CD4-positive, alpha-beta T cell (primary cell): ENCODE measurements at regions of chr15 and their contacts with region 1.

Region 1: DNA sequence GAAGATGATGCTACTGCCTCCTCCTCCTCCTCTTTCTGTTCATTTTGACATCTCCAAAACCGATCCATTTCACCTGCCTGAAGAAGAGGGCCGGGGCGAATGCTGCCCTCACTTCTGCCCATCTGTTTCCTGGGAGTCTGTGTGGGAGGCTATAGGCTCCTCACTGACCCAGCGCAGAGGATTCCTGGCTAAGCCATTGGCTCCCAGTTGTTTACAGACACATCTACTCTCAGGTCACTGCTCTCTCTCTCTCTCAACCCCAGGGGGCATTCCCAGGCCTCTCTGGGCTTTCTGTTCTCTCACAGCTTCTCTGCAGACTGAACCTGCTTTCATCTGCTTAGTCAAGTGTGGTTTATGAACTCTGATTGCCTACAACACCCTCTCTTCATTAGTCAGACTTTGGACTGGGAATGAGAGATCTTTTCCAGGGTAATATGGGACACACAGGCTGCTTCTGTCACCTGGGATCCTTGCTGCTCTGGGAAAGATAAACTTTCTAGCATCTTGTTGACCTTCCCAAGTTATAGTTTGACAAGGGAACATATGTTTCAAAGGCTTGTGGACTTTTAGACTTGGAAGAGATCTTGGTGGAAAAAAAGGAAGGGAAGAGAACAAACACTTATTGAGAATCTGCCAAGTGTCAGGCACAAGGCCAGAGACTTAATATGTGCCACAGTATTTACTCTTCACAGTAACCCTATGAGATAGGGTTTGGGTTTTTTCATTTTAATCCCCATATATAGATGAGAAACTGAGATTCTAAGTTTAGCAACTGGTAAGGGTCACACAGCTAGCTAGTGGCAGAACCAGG is 30.2 kb upstream of the USP3 start:
- DNase-seq: peak in 11 of 14 experiments; percentile 26 to 87 (median 53)
- ATAC-seq: peak; percentile 57
- H3K4me3 ChIP-seq: no peak overlapping the region
- H3K4me3 Mint-ChIP-seq: peak overlapping the region; percentile 3
- H3K27ac ChIP-seq: peak overlapping the region in 1 of 2 donors; percentile 35
- H3K27ac Mint-ChIP-seq: peak overlapping the region; percentile 82
- H3K4me1 ChIP-seq: peaks cover 61% of the 10 kb centered on the region
- H3K4me1 Mint-ChIP-seq: peaks cover 68% of the 10 kb centered on the region
- H3K27me3 ChIP-seq: no peaks in the 10 kb centered on the region
- H3K27me3 Mint-ChIP-seq: no peaks in the 10 kb centered on the region
- CTCF ChIP-seq: no peak

Region 2: GRCh38 chr15:63487076-63487757 is 13.0 kb after region 1 on chr15:
- CTCF ChIA-PET with region 1: interaction called, 4 read pairs
- POLR2A ChIA-PET with region 1: interaction called, 5 read pairs
- intact Hi-C with region 1: loop called in 1 of 2 experiments (anchors 1 kb)
- DNase-seq: peak; percentile 79 to 93 (median 88)
- ATAC-seq: peak; percentile 90
- H3K4me3 ChIP-seq: no peak overlapping the region
- H3K4me3 Mint-ChIP-seq: peak overlapping the region; percentile 2
- H3K27ac ChIP-seq: peak overlapping the region in 1 of 2 donors; percentile 33
- H3K27ac Mint-ChIP-seq: peak overlapping the region; percentile 29
- H3K4me1 ChIP-seq: peaks cover 67% of the 10 kb centered on the region
- H3K4me1 Mint-ChIP-seq: peaks cover 67% of the 10 kb centered on the region
- H3K27me3 ChIP-seq: no peaks in the 10 kb centered on the region
- H3K27me3 Mint-ChIP-seq: no peaks in the 10 kb centered on the region
- CTCF ChIP-seq: peak; percentile 96

Region 3: GRCh38 chr15:63497642-63498467 is 23.7 kb after region 1 on chr15:
- CTCF ChIA-PET with region 1: interaction called, 12 read pairs
- POLR2A ChIA-PET with region 1: interaction called, 367 read pairs
- intact Hi-C with region 1: loop called in 1 of 2 experiments (anchors 1 kb)
- DNase-seq: peak; percentile 56 to 93 (median 73)
- ATAC-seq: peak; percentile 74
- H3K4me3 ChIP-seq: peak overlapping the region; percentile 37
- H3K4me3 Mint-ChIP-seq: no peak overlapping the region
- H3K27ac ChIP-seq: peak overlapping the region; percentile 88 to 99
- H3K27ac Mint-ChIP-seq: no peak overlapping the region
- H3K4me1 ChIP-seq: peaks cover 94% of the 10 kb centered on the region
- H3K4me1 Mint-ChIP-seq: peaks cover 75% of the 10 kb centered on the region
- H3K27me3 ChIP-seq: no peaks in the 10 kb centered on the region
- H3K27me3 Mint-ChIP-seq: no peaks in the 10 kb centered on the region
- CTCF ChIP-seq: no peak

Region 4: GRCh38 chr15:63600616-63601025 is 126.4 kb after region 1 on chr15:
- CTCF ChIA-PET with region 1: no interaction called
- POLR2A ChIA-PET with region 1: interaction called, 16 read pairs
- intact Hi-C with region 1: loop called in 1 of 2 experiments (anchors 5 kb)
- DNase-seq: peak; percentile 78 to 98 (median 88)
- ATAC-seq: peak; percentile 77
- H3K4me3 ChIP-seq: peak overlapping the region; percentile 79
- H3K4me3 Mint-ChIP-seq: peak overlapping the region; percentile 95
- H3K27ac ChIP-seq: peak overlapping the region; percentile 63 to 75
- H3K27ac Mint-ChIP-seq: peak overlapping the region; percentile 90
- H3K4me1 ChIP-seq: peaks cover 55% of the 10 kb centered on the region
- H3K4me1 Mint-ChIP-seq: peaks cover 73% of the 10 kb centered on the region
- H3K27me3 ChIP-seq: no peaks in the 10 kb centered on the region
- H3K27me3 Mint-ChIP-seq: no peaks in the 10 kb centered on the region
- CTCF ChIP-seq: no peak